Activated B cell treated with CpG ODN at 0.5 μM for 24 hours (primary cell): ENCODE measurements at regions of chr12 and their contacts with region 1.

Region 1: GRCh38 chr12:92341065-92341668 is 195.5 kb upstream of the BTG1 start:
- DNase-seq: no peak
- ATAC-seq: peak; percentile 84
- H3K4me3 Mint-ChIP-seq: peak overlapping the region; percentile 79
- H3K27ac Mint-ChIP-seq: peak overlapping the region; percentile 91
- H3K4me1 Mint-ChIP-seq: peaks cover 43% of the 10 kb centered on the region
- H3K27me3 Mint-ChIP-seq: no peaks in the 10 kb centered on the region
- CTCF ChIP-seq: no peak

Region 2: GRCh38 chr12:92356425-92356824 is 15.3 kb after region 1 on chr12:
- CTCF ChIA-PET with region 1: no interaction called
- POLR2A ChIA-PET with region 1: interaction called, 4 read pairs
- intact Hi-C with region 1: loop called (anchors 2 kb)
- DNase-seq: no peak
- ATAC-seq: peak; percentile 34
- H3K4me3 Mint-ChIP-seq: no peak overlapping the region
- H3K27ac Mint-ChIP-seq: peak overlapping the region; percentile 37
- H3K4me1 Mint-ChIP-seq: peaks cover 54% of the 10 kb centered on the region
- H3K27me3 Mint-ChIP-seq: no peaks in the 10 kb centered on the region
- CTCF ChIP-seq: no peak